Activated T-helper 1 cell treated with anti-CD3 and anti-CD28 coated beads, Interleukin-12 subunit alpha, Interleukin-12 subunit beta, Interleukin-2, Interleukin-4 antibody, amounts not matched to agents 30 ng/mL and 10 ng/mL and 1 ng/mL, durations not matched to agents 14 hours and 24 hours and 36 hours (primary cell): ENCODE measurements at regions of chr15 and their contacts with region 1.

Region 1: DNA sequence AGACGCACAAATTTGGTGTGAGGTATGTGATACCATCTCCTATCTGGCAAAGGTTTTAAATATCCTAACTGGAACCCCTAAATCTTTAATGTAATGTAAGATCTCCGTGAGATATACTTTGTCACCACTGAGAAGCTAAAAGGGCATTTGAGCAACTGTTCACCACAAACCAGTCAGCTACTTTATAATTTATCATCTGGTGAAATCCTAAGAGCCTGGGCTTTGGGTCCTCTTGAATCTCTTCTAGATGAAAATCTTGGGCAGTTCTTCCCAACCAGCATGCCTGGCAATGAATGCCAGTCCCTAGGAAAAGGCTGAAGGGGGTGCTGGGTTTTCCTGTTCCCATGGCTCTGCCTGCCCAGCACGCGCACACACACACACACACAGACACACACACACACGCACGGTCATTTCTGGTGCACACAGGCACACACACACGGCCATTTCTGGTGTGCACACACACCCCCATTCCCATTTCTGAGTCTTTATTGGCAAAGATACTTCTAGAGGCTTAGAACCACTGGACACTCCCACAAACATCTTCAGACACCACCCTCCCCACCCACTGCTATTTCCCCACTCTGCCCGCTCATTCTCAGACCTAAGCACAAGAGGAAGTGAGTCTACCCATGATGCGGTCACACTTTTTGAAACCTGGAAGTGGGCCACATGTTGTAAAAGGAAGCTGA is 72.6 kb downstream of the MYO1E start:
- DNase-seq: peak; percentile 64
- H3K4me3 Mint-ChIP-seq: peak overlapping the region; percentile 55
- H3K27ac Mint-ChIP-seq: peak overlapping the region; percentile 81
- H3K4me1 Mint-ChIP-seq: peaks cover 63% of the 10 kb centered on the region
- H3K27me3 Mint-ChIP-seq: peaks cover 3% of the 10 kb centered on the region

Region 2: GRCh38 chr15:59255647-59256380 is 44.3 kb before region 1 on chr15:
- intact Hi-C with region 1: loop called (anchors 2 kb)
- DNase-seq: peak; percentile 34
- H3K4me3 Mint-ChIP-seq: no peak overlapping the region
- H3K27ac Mint-ChIP-seq: peak overlapping the region; percentile 76
- H3K4me1 Mint-ChIP-seq: peaks cover 47% of the 10 kb centered on the region
- H3K27me3 Mint-ChIP-seq: peaks cover 3% of the 10 kb centered on the region

Region 3: GRCh38 chr15:59274126-59274970 is 25.7 kb before region 1 on chr15:
- intact Hi-C with region 1: loop called (anchors 1 kb)
- DNase-seq: no peak
- H3K4me3 Mint-ChIP-seq: peak overlapping the region; percentile 28
- H3K27ac Mint-ChIP-seq: peak overlapping the region; percentile 67
- H3K4me1 Mint-ChIP-seq: peaks cover 66% of the 10 kb centered on the region
- H3K27me3 Mint-ChIP-seq: peaks cover 7% of the 10 kb centered on the region

Region 4: DNA sequence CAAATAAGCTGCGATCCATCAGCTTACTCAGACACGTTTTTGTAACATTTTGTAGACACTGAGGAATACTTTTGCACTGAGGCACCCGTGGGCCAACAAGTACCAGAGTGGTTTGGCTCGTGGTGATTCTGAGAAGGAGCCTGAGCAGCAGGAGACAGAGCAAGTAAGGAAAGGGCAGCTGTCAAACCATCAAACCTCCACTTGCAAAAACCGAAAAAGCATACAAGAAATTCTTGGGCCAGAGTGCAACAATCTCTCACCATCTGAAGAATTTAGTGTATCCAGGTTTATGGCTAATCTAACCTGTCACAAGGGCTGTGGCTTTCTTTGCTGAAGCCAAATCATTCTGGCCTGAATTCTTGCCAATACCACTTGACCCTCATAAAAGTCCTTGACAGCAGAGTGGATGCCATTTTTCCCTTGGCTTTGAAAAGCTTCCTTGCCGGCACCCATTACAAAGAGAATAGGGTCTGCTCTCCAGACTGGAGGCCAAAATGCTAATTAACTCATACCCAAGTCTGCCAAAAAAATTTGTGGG is 15.9 kb after region 1 on chr15:
- intact Hi-C with region 1: no loop called
- DNase-seq: no peak
- H3K4me3 Mint-ChIP-seq: no peak overlapping the region
- H3K27ac Mint-ChIP-seq: no peak overlapping the region
- H3K4me1 Mint-ChIP-seq: no peaks in the 10 kb centered on the region
- H3K27me3 Mint-ChIP-seq: peaks cover 2% of the 10 kb centered on the region

Region 5: DNA sequence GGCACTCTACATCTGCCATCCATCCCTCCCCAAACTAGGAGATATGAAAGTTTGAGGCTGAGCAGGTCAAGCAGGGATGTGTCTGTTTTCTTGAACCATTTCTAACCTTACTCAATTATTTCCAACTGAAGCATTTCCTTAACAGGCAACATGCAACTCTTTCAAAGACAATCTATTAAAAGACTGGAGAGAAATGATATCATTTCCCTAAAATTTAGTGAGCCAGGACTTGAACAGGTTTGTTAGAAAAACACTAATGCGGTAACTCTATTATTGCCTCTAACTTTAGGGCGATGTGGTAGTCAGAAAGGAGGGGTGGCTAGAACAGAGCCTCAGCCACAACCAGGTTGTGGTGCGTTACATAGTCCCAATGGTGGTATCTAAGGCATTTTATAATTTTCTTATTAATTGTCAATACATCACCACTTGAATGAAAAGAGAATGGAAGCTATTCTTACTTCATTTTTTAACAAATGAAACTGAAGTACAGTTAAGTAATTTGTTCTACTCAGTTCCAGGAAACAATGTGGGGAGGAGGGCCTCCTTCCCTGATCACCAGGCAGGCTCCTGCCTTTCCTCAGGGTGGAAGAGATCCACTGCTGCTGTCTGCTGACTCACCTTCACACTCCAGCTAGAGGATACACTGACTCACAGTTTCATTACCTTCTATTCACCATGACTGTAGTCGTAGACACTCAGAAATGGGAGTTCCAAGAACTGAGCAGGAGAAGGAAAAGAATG is 49.8 kb after region 1 on chr15:
- intact Hi-C with region 1: loop called (anchors 2 kb)
- DNase-seq: no peak
- H3K4me3 Mint-ChIP-seq: peak overlapping the region; percentile 26
- H3K27ac Mint-ChIP-seq: peak overlapping the region; percentile 68
- H3K4me1 Mint-ChIP-seq: peaks cover 60% of the 10 kb centered on the region
- H3K27me3 Mint-ChIP-seq: peaks cover 2% of the 10 kb centered on the region

Region 6: GRCh38 chr15:59372352-59373211 is 72.5 kb after region 1 on chr15 and contains the start of gene MYO1E:
- intact Hi-C with region 1: loop called (anchors 2 kb)
- DNase-seq: peak; percentile 34
- H3K4me3 Mint-ChIP-seq: peak within 1 kb of the TSS; percentile 96
- H3K27ac Mint-ChIP-seq: peak within 1 kb of the TSS; percentile 79
- H3K4me1 Mint-ChIP-seq: peaks cover 42% of the 10 kb centered on the region
- H3K27me3 Mint-ChIP-seq: peaks cover 31% of the 10 kb centered on the region
- total RNA-seq, gene MYO1E: 33.3 and 33.6 TPM in 2 replicates

Region 7: DNA sequence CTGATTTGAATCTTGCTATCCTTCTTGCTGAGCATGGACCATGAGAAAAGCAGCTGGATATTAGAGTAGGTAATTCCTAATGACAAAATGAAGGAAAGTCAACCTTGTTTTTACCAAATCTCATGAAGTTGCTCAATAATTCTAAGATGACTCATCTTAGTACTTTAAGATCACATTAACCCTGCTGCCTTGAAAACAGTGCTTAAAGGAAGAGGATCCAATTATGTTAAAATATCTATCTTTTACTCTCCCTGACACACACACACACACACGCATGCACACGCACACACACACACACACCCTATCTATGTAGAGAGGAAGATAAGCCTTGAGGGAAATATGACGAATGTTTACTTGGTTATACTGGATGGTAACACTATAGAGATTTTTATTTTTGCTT is 88.6 kb after region 1 on chr15:
- intact Hi-C with region 1: no loop called
- DNase-seq: no peak
- H3K4me3 Mint-ChIP-seq: no peak overlapping the region
- H3K27ac Mint-ChIP-seq: no peak overlapping the region
- H3K4me1 Mint-ChIP-seq: peaks cover 23% of the 10 kb centered on the region
- H3K27me3 Mint-ChIP-seq: peaks cover 5% of the 10 kb centered on the region